Heart right ventricle (tissue), 16 donors: ENCODE measurements at regions of chr12 and their contacts with region 1.

Region 1: DNA sequence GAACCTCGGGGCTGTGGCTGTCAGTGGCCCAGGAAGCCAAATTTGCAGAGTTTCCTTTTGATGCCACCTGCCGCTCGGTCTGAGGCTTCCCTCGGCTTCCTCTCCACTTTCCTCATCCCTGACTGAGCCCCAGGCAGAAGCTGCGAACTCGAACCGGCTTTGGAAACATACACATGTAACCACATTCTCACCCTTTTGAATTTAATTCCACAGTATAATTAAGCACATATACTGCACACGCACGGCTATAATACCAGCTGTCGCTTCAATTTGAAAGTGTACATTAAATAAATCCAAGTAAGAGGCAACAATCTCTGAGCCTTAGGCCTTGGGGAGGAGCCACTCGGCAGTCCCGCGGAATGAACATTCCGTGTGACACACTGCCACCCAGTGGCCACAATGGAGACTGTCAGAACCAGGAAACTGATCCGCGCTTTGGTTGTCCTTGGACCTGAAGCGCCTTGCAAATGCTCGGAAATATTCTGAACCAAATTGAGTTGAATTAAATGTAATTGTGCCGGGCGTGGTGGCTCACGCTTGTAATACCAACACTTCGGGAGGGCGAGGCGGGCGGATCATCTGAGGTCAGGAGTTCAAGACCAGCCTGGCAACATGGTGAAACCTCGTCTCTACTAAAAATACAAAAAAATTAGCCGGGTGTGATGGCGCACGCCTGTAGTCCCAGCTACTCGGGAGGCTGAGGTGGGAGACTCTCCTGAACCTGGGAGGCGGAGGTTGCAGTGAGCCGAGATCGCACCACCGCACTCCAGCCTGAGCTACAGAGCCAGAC is 117.9 kb upstream of the TMPO start:
- DNase-seq: peak; percentile 79 to 80
- ATAC-seq: peak; percentile 93 to 98 (median 95)
- H3K4me3 ChIP-seq: peak overlapping the region in 8 of 10 donors; percentile 0 to 63 (median 45)
- H3K27ac ChIP-seq: peak overlapping the region in 2 of 10 donors; percentile 19 to 54
- H3K4me1 ChIP-seq: peaks cover 0 to 39% (median 7%) of the 10 kb centered on the region in 9 donors
- H3K27me3 ChIP-seq: no peaks in the 10 kb centered on the region
- CTCF ChIP-seq: peak; percentile 88 to 96 (median 94)

Region 2: GRCh38 chr12:96578526-96579125 is 1818.9 kb before region 1 on chr12:
- intact Hi-C with region 1: loop called in 6 of 10 experiments (anchors 5 to 10 kb)
- DNase-seq: peak in 1 of 2 donors; percentile 6
- ATAC-seq: peak in 1 of 8 donors; percentile 58
- H3K4me3 ChIP-seq: no peak overlapping the region
- H3K27ac ChIP-seq: no peak overlapping the region
- H3K4me1 ChIP-seq: peaks cover 0 to 6% (median 0%) of the 10 kb centered on the region in 9 donors
- H3K27me3 ChIP-seq: peaks cover 0 to 4% (median 0%) of the 10 kb centered on the region in 7 donors
- CTCF ChIP-seq: peak; percentile 21 to 76 (median 65)

Region 3: DNA sequence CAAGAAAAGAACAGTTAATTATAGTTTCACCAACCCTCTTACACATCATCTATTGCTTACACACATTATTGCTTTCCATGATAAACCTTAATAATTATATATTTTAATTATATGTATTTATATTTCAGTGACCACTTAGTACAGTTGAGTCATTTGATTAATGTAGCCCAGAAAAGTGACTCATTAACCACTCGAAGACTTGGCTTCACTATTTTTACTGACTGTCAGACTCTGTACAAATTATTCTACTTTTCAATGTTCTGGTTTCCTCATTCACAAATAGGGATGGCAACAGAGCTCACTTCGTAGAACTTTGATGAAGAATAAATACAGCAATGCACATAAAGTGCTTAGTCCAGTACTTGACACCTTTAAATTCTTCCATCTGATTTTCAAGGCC is 1809.8 kb before region 1 on chr12:
- intact Hi-C with region 1: loop called in 1 of 10 experiments (anchors 10 kb)
- DNase-seq: no peak
- ATAC-seq: no peak
- H3K4me3 ChIP-seq: no peak overlapping the region
- H3K27ac ChIP-seq: no peak overlapping the region
- H3K4me1 ChIP-seq: no peaks in the 10 kb centered on the region
- H3K27me3 ChIP-seq: no peaks in the 10 kb centered on the region
- CTCF ChIP-seq: no peak

Region 4: GRCh38 chr12:97148941-97149559 is 1248.5 kb before region 1 on chr12:
- intact Hi-C with region 1: loop called in 3 of 10 experiments (anchors 5 to 10 kb)
- DNase-seq: peak; percentile 39 to 47
- ATAC-seq: peak; percentile 70 to 88 (median 80)
- H3K4me3 ChIP-seq: no peak overlapping the region
- H3K27ac ChIP-seq: no peak overlapping the region
- H3K4me1 ChIP-seq: no peaks in the 10 kb centered on the region
- H3K27me3 ChIP-seq: no peaks in the 10 kb centered on the region
- CTCF ChIP-seq: peak; percentile 34 to 82 (median 72)

Region 5: DNA sequence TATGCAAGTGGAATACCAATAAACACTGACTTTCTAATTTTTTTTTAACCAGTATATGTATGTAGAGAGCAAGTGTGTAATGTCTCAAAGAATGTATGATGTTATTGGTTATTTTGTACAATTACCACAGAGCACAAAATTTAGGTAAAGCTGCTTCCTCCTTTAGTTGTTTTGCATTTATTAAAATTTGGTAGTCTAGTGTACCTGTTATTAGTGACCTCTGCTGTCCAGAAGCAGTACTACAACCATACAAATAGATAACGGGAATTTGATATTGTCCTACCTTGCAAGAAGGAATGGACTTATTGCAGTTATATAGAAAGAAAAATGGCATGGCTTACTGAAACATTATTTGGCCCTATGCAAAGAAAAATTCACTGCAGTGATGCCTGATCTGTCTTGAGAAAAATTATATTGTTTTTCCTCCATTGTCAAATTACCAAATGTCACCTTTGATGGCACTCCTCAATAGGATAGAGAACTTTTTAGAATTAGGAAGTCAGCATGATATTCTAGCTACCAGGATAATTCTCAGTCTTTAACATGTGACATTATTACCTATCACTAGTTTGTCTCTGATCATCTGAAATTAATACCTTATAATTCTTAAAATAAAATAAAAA is 1088.8 kb before region 1 on chr12:
- intact Hi-C with region 1: loop called in 1 of 10 experiments (anchors 5 kb)
- DNase-seq: peak in 1 of 2 donors; percentile 20
- ATAC-seq: no peak
- H3K4me3 ChIP-seq: no peak overlapping the region
- H3K27ac ChIP-seq: no peak overlapping the region
- H3K4me1 ChIP-seq: peaks cover 0 to 6% (median 0%) of the 10 kb centered on the region in 9 donors
- H3K27me3 ChIP-seq: peaks cover 0 to 10% (median 0%) of the 10 kb centered on the region in 7 donors
- CTCF ChIP-seq: peak; percentile 52 to 87 (median 77)

Region 6: DNA sequence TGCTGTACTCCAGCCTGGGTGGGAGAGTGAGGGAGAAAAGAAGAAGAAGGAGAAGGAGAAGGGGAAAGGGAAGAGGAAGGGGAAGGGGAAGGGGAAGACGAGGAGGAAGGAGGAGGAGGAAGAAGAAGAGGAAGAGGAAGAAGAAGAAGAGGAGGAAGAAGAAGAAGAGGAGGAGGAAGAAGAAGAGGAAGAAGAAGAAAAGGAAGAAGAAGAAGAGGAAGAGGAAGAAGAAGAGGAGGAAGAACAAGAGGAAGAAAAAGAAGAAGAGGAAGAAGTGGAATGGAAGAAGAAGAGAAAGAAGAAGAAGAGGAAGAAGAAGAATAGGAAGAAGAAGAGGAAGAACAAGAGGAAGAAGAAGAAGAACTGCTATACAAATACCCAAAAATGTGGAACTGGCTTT is 389.5 kb before region 1 on chr12:
- intact Hi-C with region 1: no loop called
- DNase-seq: no peak
- ATAC-seq: no peak
- H3K4me3 ChIP-seq: no peak overlapping the region
- H3K27ac ChIP-seq: no peak overlapping the region
- H3K4me1 ChIP-seq: no peaks in the 10 kb centered on the region
- H3K27me3 ChIP-seq: peaks cover 0 to 3% (median 0%) of the 10 kb centered on the region in 7 donors
- CTCF ChIP-seq: no peak

Region 7: DNA sequence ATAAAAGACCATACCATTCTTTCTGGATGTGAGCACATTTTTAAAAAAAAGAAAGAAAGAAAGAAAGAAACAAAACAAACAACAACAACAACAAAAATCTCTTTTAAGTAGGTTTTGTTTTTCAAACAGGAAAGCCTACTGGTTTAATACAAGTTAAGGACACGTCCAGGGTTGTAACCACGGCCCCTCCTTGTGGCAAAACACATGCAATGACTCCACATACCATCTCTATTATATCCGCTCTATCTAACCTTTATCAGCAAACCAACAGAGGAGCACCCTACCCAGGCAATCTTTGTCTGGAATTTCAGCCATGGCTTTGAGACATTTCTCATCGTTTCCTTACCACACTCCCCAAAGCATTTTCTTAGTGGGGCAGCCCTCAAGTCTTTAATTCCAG is 242.7 kb before region 1 on chr12:
- intact Hi-C with region 1: loop called in 1 of 10 experiments (anchors 10 kb)
- DNase-seq: peak in 1 of 2 donors; percentile 11
- ATAC-seq: peak in 3 of 8 donors; percentile 61 to 70 (median 62)
- H3K4me3 ChIP-seq: no peak overlapping the region
- H3K27ac ChIP-seq: no peak overlapping the region
- H3K4me1 ChIP-seq: peaks cover 0 to 9% (median 0%) of the 10 kb centered on the region in 9 donors
- H3K27me3 ChIP-seq: no peaks in the 10 kb centered on the region
- CTCF ChIP-seq: peak in 8 of 9 donors; percentile 15 to 69 (median 50)

Region 8: GRCh38 chr12:98345308-98345876 is 52.1 kb before region 1 on chr12:
- intact Hi-C with region 1: no loop called
- DNase-seq: no peak
- ATAC-seq: no peak
- H3K4me3 ChIP-seq: no peak overlapping the region
- H3K27ac ChIP-seq: no peak overlapping the region
- H3K4me1 ChIP-seq: no peaks in the 10 kb centered on the region
- H3K27me3 ChIP-seq: no peaks in the 10 kb centered on the region
- CTCF ChIP-seq: no peak